Left cardiac atrium (tissue), 4 donors: ENCODE measurements at regions of chr10 and their contacts with region 1.

Region 1: DNA sequence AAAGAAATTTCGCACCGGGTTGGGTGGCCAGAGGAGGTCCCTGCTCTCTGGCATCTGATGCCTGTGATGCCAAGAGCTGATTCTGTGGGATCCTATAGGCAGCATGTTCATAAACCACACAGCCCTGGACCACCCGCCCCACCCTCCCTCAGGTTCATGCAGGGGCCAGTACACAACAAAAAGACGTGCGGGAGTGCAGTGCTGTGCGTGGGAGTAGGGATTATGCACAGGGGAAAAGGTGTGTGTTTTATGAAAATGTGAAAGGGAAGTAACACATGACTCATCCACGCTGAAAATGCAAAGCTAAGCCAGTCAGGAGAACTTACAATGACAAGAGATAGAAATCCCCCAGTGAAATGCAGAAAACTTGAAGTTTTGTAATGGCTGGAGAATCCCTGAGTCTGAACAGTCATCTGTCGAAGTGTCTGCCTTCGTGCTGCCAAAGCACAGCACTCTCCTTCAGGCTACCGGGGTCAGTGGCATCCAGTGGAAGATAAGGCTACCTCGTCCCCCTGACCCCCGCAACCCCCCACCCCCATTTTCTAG is 1.1 kb downstream of the KIAA1217 start:
- DNase-seq: no peak
- ATAC-seq: peak; percentile 9 to 42

Region 2: GRCh38 chr10:23886355-23886754 is 323.7 kb before region 1 on chr10:
- intact Hi-C with region 1: loop called in 1 of 2 experiments (anchors 10 kb)
- DNase-seq: no peak
- ATAC-seq: peak; percentile 34 to 51

Region 3: DNA sequence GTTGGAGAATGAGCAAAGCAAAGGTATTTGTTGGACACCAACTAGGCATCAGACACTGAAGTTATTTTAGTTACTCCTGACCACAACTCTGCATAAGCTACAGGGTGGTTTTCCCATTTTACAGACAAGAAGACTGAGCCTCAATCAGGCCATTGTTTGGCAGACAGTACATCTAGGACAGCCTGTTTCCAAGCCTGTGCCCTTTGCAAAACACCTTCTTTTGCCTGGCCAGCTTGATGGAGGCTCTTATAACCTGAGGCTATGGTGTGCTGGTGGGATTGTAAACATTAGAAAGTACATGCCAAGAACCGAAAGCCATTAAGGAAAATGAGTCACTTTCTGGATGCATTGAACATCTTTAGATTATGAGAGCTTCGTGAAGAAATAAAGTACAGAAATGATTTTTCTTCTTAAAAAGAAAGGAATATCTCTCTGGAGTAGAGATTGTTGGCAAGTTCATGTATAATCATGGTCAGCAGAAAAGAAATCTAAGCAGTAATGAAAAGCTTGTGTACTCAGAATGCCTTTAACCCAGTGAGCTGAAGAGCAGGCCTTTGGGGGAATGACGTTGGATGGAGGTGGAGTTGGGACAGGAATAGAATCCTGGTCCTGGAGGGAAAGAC is 139.5 kb after region 1 on chr10:
- intact Hi-C with region 1: loop called in 1 of 2 experiments (anchors 10 kb)
- DNase-seq: no peak
- ATAC-seq: peak in 1 of 2 donors; percentile 74

Region 4: GRCh38 chr10:24360282-24361127 is 150.5 kb after region 1 on chr10:
- intact Hi-C with region 1: loop called (anchors 5 to 10 kb)
- DNase-seq: peak; percentile 80
- ATAC-seq: peak; percentile 82 to 85

Region 5: GRCh38 chr10:24503461-24504320 is 293.7 kb after region 1 on chr10:
- intact Hi-C with region 1: loop called in 1 of 2 experiments (anchors 10 kb)
- DNase-seq: no peak
- ATAC-seq: peak in 1 of 2 donors; percentile 39